ENCODE measurements at regions of chr5 and their contacts with region 1.

Region 1: GRCh38 chr5:143806579-143806978 is 5.4 kb upstream of the HMHB1 start:
- DNase-seq: no peak
- H3K4me3 ChIP-seq: no peak overlapping the region
- H3K27ac ChIP-seq: no peak overlapping the region
- H3K4me1 ChIP-seq: no peaks in the 10 kb centered on the region
- H3K27me3 ChIP-seq: no peaks in the 10 kb centered on the region
- CTCF ChIP-seq: no peak
- EP300 ChIP-seq: no peak
- POLR2A ChIP-seq: no peak

Region 2: GRCh38 chr5:143453720-143454119 is 352.9 kb before region 1 on chr5:
- in situ Hi-C with region 1: loop called in 1 of 4 experiments (anchors 25 kb)
- intact Hi-C with region 1: loop called (anchors 2 kb)
- DNase-seq: no peak
- H3K4me3 ChIP-seq: no peak overlapping the region
- H3K27ac ChIP-seq: no peak overlapping the region
- H3K4me1 ChIP-seq: no peaks in the 10 kb centered on the region
- H3K27me3 ChIP-seq: no peaks in the 10 kb centered on the region
- CTCF ChIP-seq: no peak
- EP300 ChIP-seq: no peak
- POLR2A ChIP-seq: no peak

Region 3: GRCh38 chr5:143882520-143882919 is 75.9 kb after region 1 on chr5:
- in situ Hi-C with region 1: no loop called
- intact Hi-C with region 1: no loop called
- DNase-seq: no peak
- H3K4me3 ChIP-seq: no peak overlapping the region
- H3K27ac ChIP-seq: no peak overlapping the region
- H3K4me1 ChIP-seq: peaks cover 0 to 9% (median 3%) of the 10 kb centered on the region in 4 donors
- H3K27me3 ChIP-seq: no peaks in the 10 kb centered on the region
- CTCF ChIP-seq: no peak
- EP300 ChIP-seq: no peak
- POLR2A ChIP-seq: no peak

Region 4: DNA sequence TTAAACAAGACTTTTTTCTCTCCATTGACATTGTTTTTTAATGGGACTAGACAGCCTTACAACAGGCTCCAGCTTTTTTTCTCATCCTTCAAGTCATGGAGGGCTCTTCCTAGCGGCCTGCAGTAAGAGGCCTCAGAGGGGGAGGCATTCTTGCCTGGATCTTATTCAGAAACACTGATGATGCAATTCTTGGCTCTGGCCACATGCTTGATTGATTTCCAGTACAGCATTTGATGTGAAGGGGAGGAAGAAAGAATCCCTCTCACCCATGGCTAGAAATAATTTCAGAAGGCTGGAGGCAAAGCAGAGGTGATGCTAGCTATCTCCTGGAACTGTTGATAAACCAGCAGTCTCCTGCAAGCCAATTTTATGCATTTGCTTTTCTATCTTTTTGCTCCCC is 1703.7 kb after region 1 on chr5:
- in situ Hi-C with region 1: no loop called
- intact Hi-C with region 1: no loop called
- DNase-seq: no peak
- H3K4me3 ChIP-seq: no peak overlapping the region
- H3K27ac ChIP-seq: no peak overlapping the region
- H3K4me1 ChIP-seq: no peaks in the 10 kb centered on the region
- H3K27me3 ChIP-seq: no peaks in the 10 kb centered on the region
- CTCF ChIP-seq: no peak
- EP300 ChIP-seq: no peak
- POLR2A ChIP-seq: no peak

Measured in transverse colon (tissue), 4 donors.